ENCODE measurements at regions of chr6 and their contacts with region 1.

Region 1: GRCh38 chr6:87407901-87408720 is at the start of gene CFAP206:
- DNase-seq: peak; percentile 80
- ATAC-seq: peak; percentile 89
- H3K4me3 ChIP-seq: peak within 1 kb of the TSS; percentile 85
- H3K27ac ChIP-seq: peak within 1 kb of the TSS; percentile 58; the same call in 1 of the 2 replicates
- H3K4me1 ChIP-seq: no peaks in the 10 kb centered on the region
- H3K27me3 ChIP-seq: no peaks in the 10 kb centered on the region; the same call in 1 of the 2 replicates
- CTCF ChIP-seq: no peak
- POLR2A ChIP-seq: no peak
- RAD21 ChIP-seq: no peak
- total RNA-seq, gene CFAP206: under 0.01 and 0.28 TPM in 2 replicates

Region 2: DNA sequence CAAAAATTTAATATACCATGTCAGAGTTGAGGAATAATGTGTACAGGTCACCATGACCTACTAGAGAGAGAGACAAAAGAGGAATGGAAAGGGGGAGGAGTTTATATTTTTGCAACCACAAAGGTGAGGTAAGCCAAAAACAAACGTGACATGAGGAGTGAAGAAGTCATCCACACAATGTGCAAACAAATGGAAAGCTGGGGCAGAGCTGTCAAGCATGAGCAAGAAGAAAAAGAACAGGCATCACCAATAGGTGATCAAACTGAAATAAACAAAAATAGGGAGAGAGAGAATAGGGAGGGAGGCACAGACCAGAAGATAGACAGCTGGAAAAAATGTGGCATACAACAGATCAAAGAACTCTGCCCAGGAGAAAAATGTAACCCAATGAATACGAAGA is 166.2 kb after region 1 on chr6:
- CTCF ChIA-PET with region 1: no interaction called
- POLR2A ChIA-PET with region 1: no interaction called
- dilution Hi-C with region 1: no loop called
- in situ Hi-C with region 1: no loop called
- intact Hi-C with region 1: loop called (anchors 10 kb)
- DNase-seq: no peak
- ATAC-seq: no peak
- H3K4me3 ChIP-seq: no peak overlapping the region
- H3K27ac ChIP-seq: no peak overlapping the region
- H3K4me1 ChIP-seq: peaks cover 27% of the 10 kb centered on the region
- H3K27me3 ChIP-seq: no peaks in the 10 kb centered on the region
- CTCF ChIP-seq: no peak
- POLR2A ChIP-seq: no peak
- RAD21 ChIP-seq: no peak

Region 3: GRCh38 chr6:88165844-88166492 is 757.9 kb after region 1 on chr6 and contains the start of gene CNR1:
- CTCF ChIA-PET with region 1: no interaction called
- POLR2A ChIA-PET with region 1: no interaction called
- dilution Hi-C with region 1: no loop called
- in situ Hi-C with region 1: no loop called
- intact Hi-C with region 1: loop called (anchors 10 kb)
- DNase-seq: no peak
- ATAC-seq: peak; percentile 83
- H3K4me3 ChIP-seq: peak within 1 kb of the TSS; percentile 29
- H3K27ac ChIP-seq: no peak within 1 kb of the TSS
- H3K4me1 ChIP-seq: peaks cover 2% of the 10 kb centered on the region; the same call in 1 of the 2 replicates
- H3K27me3 ChIP-seq: peaks cover 46% of the 10 kb centered on the region
- CTCF ChIP-seq: no peak
- POLR2A ChIP-seq: no peak
- RAD21 ChIP-seq: no peak
- total RNA-seq, gene CNR1: not detected in 2 replicates

Measured in IMR-90 (cell line).